ENCODE measurements at regions of chr5 and their contacts with region 1.

Region 1: DNA sequence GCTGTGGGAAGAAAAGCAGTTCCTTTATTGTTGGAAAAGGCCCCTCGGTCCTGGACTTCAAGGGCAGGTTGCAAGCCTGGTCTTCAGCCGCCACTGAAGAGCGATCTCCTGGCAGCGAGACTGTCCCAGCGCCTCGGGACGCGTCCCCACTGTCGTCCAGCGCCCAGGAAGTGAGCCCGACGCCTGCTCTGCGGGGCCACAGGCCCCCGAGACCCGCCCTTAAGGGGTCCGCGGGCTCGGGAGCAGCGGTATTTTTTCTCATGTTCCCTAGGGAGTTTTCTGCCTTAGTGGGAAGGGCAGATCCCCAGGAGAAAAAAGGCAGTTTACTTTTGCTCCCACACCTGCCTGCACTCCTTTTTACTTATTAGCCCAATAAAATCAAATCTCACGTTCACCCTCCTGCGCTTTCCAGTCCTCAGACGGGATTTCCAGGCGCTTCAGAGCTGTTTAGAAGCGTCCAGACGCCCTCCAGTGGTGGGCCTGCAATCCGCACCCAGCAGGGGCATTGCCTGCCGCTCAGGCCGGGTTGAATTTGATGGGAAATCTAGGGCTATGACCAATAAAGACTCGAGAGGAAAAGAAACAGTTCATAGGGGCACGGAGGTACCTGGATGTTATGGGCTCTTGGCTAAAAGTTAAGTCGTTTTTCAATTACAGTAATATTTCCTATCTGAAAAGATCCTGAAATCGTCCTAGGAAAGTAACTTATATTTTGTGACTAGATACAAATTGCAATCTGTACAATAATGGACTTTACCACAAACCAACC is 2.8 kb upstream of the EFNA5 start:
- DNase-seq: peak; percentile 59
- ATAC-seq: peak; percentile 72
- H3K4me3 ChIP-seq: peak overlapping the region; percentile 69
- H3K27ac ChIP-seq: peak overlapping the region; percentile 26; the same call in 1 of the 2 replicates
- H3K4me1 ChIP-seq: peaks cover 10% of the 10 kb centered on the region
- H3K27me3 ChIP-seq: peaks cover 0 to 4% of the 10 kb centered on the region in 2 experiments; a peak in 2 of 4 replicates
- CTCF ChIP-seq: peak; percentile 96 to 99 (median 97)
- EP300 ChIP-seq: no peak
- POLR2A ChIP-seq: no peak
- RAD21 ChIP-seq: peak; percentile 98

Region 2: DNA sequence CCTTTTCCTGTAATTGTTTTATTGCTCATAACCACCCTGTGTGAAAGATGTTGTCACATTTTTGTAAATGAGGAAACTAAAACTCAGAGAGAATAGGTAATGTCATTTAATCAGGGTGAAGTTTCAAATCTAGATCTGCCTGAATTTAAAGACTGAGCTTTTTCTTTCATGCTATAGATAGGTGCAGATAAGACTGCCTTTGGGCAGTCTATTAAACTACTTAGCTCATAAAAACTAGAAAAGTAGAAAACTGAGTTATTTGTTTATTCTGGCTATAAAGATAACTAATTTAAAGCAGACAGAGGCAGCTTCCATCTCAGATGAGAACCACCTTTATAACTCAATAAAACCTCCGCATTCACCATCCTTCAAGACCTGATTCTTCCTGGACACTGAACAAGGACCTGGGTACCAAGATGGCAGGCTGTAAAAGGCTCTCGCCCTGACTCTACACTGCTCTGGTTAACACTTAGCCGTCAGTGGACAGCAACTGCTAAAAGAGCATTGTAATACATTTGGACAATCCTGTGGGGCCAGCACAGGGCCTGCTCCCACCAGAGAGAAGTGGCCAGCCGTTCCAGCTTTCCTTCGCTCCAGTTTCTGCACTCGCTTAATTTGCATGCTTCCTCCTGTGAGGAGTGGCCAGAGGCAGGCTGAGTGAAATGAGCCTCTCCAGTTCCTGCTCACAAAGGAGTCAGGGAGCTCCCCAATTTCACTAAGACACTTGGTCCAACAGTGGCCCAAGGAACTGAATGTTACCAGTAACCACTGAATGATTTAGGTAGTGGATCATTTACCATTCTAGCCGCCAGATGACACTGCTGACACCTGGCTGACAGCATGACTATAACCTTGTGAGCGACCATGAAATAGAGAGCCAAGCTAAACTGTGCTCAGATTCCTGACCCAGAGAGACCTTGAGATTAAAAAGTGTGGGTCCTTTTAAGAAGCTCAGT is 569.2 kb before region 1 on chr5:
- CTCF ChIA-PET with region 1: interaction called, 26 read pairs
- POLR2A ChIA-PET with region 1: no interaction called
- RAD21 ChIA-PET with region 1: interaction called, 20 read pairs
- SMC1A ChIA-PET with region 1: interaction called, 23 read pairs
- in situ Hi-C with region 1: loop called (anchors 10 kb)
- intact Hi-C with region 1: loop called (anchors 2 kb)
- DNase-seq: peak; percentile 28
- ATAC-seq: peak; percentile 96
- H3K4me3 ChIP-seq: no peak overlapping the region
- H3K27ac ChIP-seq: no peak overlapping the region
- H3K4me1 ChIP-seq: no peaks in the 10 kb centered on the region
- H3K27me3 ChIP-seq: no peaks in the 10 kb centered on the region
- CTCF ChIP-seq: peak; percentile 18 to 81 (median 52); a peak in 4 of 6 replicates
- EP300 ChIP-seq: no peak
- POLR2A ChIP-seq: no peak
- RAD21 ChIP-seq: peak; percentile 61

Region 3: DNA sequence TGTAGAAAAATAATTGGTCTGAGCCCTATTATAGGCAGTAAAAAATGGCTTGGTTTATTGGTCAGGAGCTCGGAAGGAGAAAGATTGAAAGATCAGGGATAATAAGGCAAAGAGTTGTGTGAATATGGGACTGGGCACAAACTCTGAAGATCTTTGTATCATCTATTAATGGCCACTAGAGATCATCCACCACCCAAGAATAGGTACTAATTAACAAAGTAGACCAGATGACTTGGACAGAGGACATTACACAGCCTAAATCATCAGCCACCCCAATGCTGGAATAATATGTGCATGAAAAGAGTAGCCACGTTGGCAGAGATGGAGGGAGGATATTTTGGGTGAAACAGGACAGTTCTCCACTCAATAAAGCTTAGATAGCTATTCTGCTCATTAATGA is 367.0 kb before region 1 on chr5:
- CTCF ChIA-PET with region 1: interaction called, 4 read pairs
- POLR2A ChIA-PET with region 1: no interaction called
- RAD21 ChIA-PET with region 1: interaction called, 3 read pairs
- SMC1A ChIA-PET with region 1: interaction called, 5 read pairs
- in situ Hi-C with region 1: no loop called
- intact Hi-C with region 1: loop called (anchors 5 kb)
- DNase-seq: no peak
- ATAC-seq: 0 out of 3 replicates have a peak, but pooled peaks have one; percentile 26
- H3K4me3 ChIP-seq: no peak overlapping the region
- H3K27ac ChIP-seq: no peak overlapping the region
- H3K4me1 ChIP-seq: no peaks in the 10 kb centered on the region
- H3K27me3 ChIP-seq: 0 out of 4 replicates have a peak, but pooled peaks cover 0 to 2% of the 10 kb centered on the region in 2 experiments
- CTCF ChIP-seq: no peak
- EP300 ChIP-seq: no peak
- POLR2A ChIP-seq: no peak
- RAD21 ChIP-seq: peak; percentile 51; the same call in 1 of the 2 replicates

Region 4: GRCh38 chr5:107476783-107477182 is 196.8 kb before region 1 on chr5:
- CTCF ChIA-PET with region 1: interaction called, 3 read pairs
- POLR2A ChIA-PET with region 1: no interaction called
- RAD21 ChIA-PET with region 1: no interaction called
- SMC1A ChIA-PET with region 1: interaction called, 4 read pairs
- in situ Hi-C with region 1: no loop called
- intact Hi-C with region 1: loop called (anchors 5 kb)
- DNase-seq: peak; percentile 80
- ATAC-seq: peak; percentile 90
- H3K4me3 ChIP-seq: no peak overlapping the region
- H3K27ac ChIP-seq: peak overlapping the region; percentile 50
- H3K4me1 ChIP-seq: peaks cover 23% of the 10 kb centered on the region
- H3K27me3 ChIP-seq: no peaks in the 10 kb centered on the region; a peak in 1 of 4 replicates
- CTCF ChIP-seq: no peak
- EP300 ChIP-seq: peak; percentile 83 to 99
- POLR2A ChIP-seq: no peak
- RAD21 ChIP-seq: 0 out of 2 replicates have a peak, but pooled peaks have one; percentile 4

Region 5: DNA sequence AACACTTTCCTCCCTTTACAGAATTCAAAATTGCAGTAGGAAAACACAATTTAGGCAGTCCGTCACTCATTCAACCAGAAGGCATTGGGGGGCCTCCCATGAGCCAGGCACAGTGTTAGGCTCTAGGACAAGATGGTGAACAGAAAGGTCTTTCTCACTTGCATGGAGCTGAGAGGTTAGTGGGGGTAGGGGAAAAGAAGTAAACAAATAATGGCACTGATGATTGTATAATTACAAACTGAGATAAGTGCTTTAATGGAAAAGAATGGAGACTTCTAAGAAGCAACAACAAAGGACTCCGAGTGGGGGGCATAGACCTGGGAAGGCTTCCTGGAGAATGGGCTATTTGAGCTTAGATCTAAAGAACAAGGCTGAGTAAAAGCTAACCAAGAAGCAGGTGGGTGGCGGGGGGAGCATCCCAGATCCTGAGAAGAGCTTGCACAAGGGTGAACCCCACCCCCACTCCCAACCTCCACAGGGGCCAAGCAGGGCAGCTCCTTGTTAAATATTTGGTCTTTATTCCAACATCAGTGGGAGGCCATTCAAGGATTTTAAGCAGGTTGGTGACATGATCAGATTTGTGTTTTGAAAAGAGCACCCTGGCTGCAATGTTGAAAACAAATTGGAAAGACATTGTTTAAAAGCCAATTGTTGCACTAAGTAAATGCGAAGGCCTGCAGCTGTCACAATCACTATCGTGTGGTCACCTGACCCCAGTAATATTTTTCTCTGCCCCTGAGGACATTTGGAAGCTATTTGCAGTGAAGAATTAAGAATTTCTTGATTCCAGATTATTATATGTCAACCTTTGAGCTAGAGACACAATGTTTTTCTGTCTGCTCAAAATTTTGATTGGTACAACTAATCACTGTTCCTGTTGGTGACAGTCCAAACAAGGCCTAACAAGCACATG is 71.1 kb after region 1 on chr5:
- CTCF ChIA-PET with region 1: no interaction called
- POLR2A ChIA-PET with region 1: no interaction called
- RAD21 ChIA-PET with region 1: no interaction called
- SMC1A ChIA-PET with region 1: no interaction called
- in situ Hi-C with region 1: no loop called
- intact Hi-C with region 1: no loop called
- DNase-seq: no peak
- ATAC-seq: no peak
- H3K4me3 ChIP-seq: no peak overlapping the region
- H3K27ac ChIP-seq: no peak overlapping the region
- H3K4me1 ChIP-seq: no peaks in the 10 kb centered on the region
- H3K27me3 ChIP-seq: no peaks in the 10 kb centered on the region; a peak in 1 of 4 replicates
- CTCF ChIP-seq: no peak
- EP300 ChIP-seq: no peak
- POLR2A ChIP-seq: no peak
- RAD21 ChIP-seq: no peak

Region 6: GRCh38 chr5:108093186-108093585 is 419.6 kb after region 1 on chr5:
- CTCF ChIA-PET with region 1: interaction called, 3 read pairs
- POLR2A ChIA-PET with region 1: interaction called, 3 read pairs
- RAD21 ChIA-PET with region 1: no interaction called
- SMC1A ChIA-PET with region 1: interaction called, 3 read pairs
- in situ Hi-C with region 1: no loop called
- intact Hi-C with region 1: loop called (anchors 5 kb)
- DNase-seq: no peak
- ATAC-seq: peak; percentile 59; the same call in 2 of the 3 replicates
- H3K4me3 ChIP-seq: no peak overlapping the region
- H3K27ac ChIP-seq: no peak overlapping the region
- H3K4me1 ChIP-seq: no peaks in the 10 kb centered on the region
- H3K27me3 ChIP-seq: no peaks in the 10 kb centered on the region
- CTCF ChIP-seq: peak; percentile 27 to 39 (median 38); a peak in 3 of 6 replicates
- EP300 ChIP-seq: no peak
- POLR2A ChIP-seq: no peak
- RAD21 ChIP-seq: peak; percentile 34; the same call in 1 of the 2 replicates